Caco-2 (cell line): ENCODE measurements at regions of chr3 and their contacts with region 1.

Region 1: DNA sequence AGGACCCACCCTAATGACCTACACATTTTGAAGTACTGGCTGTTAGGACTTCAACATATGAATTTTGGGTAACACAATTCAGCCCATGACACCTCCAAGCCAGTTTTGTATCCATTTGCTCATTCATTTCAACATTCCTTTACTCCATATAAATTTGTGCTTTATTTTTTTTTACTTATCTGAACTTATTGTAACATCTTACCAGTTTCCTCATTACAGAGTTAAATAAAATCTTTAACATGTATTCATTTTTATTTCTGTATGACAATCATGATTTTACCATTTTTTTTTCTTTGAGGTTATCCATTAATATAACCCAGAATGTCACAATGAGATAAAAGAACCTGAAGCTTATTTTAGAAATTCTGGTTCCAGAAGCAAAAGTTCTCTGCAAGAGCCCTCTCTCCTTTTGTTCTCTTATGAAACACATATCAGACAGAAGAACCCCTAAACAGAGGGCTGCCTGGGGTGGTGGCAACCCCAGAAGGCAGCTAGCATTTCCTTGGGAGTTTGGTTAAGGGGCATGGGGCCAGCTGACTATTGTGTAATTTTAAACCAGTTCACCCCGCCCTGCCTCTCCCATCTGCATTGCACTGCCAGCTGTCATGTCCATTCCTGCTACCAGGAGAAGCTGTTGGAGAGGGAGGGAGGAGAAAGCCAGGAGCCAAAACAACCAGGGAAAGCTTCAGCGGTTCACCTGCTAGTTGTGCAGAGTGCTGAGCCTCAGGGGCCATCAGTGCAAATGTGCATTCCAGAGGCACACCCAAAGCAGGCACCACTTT is 47.8 kb upstream of the ATP1B3 start:
- DNase-seq: peak; percentile 30 to 54
- H3K4me3 ChIP-seq: no peak overlapping the region
- H3K4me3 Mint-ChIP-seq: no peak overlapping the region
- H3K27ac Mint-ChIP-seq: no peak overlapping the region
- H3K4me1 ChIP-seq: peaks cover 10% of the 10 kb centered on the region
- H3K4me1 Mint-ChIP-seq: peaks cover 7% of the 10 kb centered on the region
- H3K27me3 ChIP-seq: no peaks in the 10 kb centered on the region
- H3K27me3 Mint-ChIP-seq: peaks cover 2% of the 10 kb centered on the region
- CTCF ChIP-seq: no peak

Region 2: DNA sequence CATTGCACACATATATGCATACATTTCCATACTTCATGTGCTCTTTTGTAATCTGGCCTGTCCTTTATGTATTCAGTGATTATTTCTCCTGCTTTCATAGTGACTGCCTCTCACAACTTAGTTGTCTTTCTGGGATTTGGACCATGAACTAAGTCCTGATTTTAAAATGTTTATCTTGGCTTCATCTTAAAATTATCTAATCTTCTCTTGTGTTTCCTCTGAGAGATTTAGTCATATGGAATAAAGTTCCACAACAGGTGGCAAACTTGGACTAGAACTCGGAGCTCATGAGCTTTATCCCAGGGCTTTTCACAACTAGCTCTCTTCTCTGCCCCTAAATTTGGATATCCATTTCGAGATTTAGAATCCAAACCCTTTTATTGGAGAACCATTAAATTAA is 1217.0 kb after region 1 on chr3:
- CTCF ChIA-PET with region 1: no interaction called
- POLR2A ChIA-PET with region 1: interaction called, 10 read pairs
- intact Hi-C with region 1: no loop called
- DNase-seq: no peak
- H3K4me3 ChIP-seq: no peak overlapping the region
- H3K4me3 Mint-ChIP-seq: no peak overlapping the region
- H3K27ac Mint-ChIP-seq: no peak overlapping the region
- H3K4me1 ChIP-seq: no peaks in the 10 kb centered on the region
- H3K4me1 Mint-ChIP-seq: no peaks in the 10 kb centered on the region
- H3K27me3 ChIP-seq: no peaks in the 10 kb centered on the region
- H3K27me3 Mint-ChIP-seq: no peaks in the 10 kb centered on the region
- CTCF ChIP-seq: no peak